HepG2 (cell line): ENCODE measurements at regions of chr3 and their contacts with region 1.

Region 1: DNA sequence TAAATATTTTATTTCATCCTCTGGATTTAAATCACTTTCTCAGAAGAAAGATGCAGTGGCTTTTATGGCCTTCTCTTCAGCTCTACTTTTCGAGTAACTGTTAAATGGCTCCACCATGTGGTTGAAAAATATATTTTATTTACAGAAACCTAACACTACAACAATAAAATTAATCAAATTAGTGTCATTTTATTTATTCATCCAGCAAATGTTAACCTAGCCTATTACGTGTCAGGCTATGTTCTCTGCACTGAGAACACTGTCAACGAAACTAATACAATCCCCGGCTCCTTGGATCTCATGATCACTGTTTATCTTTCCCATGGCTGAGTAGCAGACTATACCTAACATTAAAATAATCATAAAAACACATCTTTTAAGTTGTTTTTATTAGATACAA is 148.0 kb upstream of the OSTN start:
- DNase-seq: peak; percentile 9
- ATAC-seq: peak; percentile 55; the same call in 2 of the 3 replicates
- H3K4me3 ChIP-seq: no peak overlapping the region
- H3K27ac ChIP-seq: no peak overlapping the region
- H3K4me1 ChIP-seq: no peaks in the 10 kb centered on the region
- H3K27me3 ChIP-seq: no peaks in the 10 kb centered on the region
- CTCF ChIP-seq: peak; percentile 51; the same call in 1 of the 2 replicates
- EP300 ChIP-seq: no peak
- POLR2A ChIP-seq: no peak
- RAD21 ChIP-seq: no peak

Region 2: DNA sequence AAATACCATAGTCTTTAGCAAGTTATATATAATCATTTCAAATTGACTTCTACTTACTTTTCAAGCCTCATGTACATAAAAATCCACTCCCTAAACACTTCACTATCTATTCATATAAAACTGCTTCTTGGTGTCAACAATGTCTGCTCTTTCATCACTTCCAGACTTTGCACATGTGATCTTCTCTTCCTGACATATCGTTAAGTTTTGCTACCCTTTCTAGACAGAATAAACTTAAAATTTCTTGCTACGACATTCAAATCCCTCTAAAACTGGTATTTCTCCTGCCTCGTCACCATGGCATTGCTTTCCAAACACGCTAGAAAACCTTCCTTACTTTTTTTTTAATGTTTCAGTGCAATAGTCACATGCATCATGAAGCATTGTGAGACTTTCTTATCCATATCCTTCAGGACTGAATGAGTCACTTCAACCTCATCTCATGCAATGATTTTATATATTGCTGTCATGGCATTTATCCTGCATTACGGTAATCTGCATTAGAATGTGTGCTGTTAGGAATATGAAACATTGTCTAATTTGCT is 311.3 kb before region 1 on chr3:
- CTCF ChIA-PET with region 1: no interaction called
- POLR2A ChIA-PET with region 1: no interaction called
- in situ Hi-C with region 1: no loop called
- intact Hi-C with region 1: no loop called
- DNase-seq: no peak
- ATAC-seq: no peak
- H3K4me3 ChIP-seq: no peak overlapping the region
- H3K27ac ChIP-seq: no peak overlapping the region
- H3K4me1 ChIP-seq: no peaks in the 10 kb centered on the region
- H3K27me3 ChIP-seq: no peaks in the 10 kb centered on the region
- CTCF ChIP-seq: no peak
- EP300 ChIP-seq: no peak
- POLR2A ChIP-seq: no peak
- RAD21 ChIP-seq: no peak

Region 3: DNA sequence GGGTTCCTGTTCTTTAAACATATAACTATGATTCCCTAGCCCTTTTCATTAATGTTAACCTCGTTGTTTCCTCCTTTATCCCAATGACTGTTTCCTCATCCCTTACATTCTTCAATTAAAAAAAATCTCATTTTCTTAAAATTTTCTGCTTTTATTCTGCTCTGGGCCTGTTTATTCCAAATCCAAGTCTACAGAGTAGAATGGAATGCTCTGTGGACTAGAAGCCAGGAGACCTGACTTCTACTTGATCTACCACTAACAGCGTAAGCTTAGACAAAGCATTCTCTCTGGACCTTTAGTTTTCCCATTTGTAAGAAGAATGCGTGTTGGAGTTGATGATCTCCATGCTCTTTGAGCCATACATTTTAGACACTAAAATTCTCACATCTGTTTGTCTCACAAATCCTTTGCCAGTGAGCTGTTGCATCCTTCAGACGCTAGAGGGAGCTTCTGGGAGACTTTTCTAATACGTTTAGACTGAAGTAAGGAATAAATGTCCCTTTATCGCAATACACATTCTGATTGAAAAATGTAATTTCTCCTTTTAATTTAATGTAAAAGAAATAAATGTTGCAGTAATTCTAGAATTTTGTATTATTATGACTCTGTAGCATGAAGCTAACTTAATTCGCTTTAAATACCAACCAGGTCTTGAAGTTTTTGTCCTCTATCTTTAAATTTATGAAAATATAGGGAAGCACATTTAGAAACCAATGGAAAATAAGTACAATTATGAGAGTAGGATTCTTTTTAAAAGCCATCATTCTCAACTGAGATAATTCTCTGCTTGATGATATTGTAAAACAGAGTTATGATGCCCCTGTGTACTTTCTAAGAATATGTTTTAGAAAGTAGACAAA is 166.8 kb before region 1 on chr3:
- CTCF ChIA-PET with region 1: interaction called, 14 read pairs
- POLR2A ChIA-PET with region 1: no interaction called
- in situ Hi-C with region 1: loop called (anchors 10 kb)
- intact Hi-C with region 1: loop called (anchors 1 kb)
- DNase-seq: peak; percentile 53
- ATAC-seq: peak; percentile 68
- H3K4me3 ChIP-seq: no peak overlapping the region
- H3K27ac ChIP-seq: no peak overlapping the region
- H3K4me1 ChIP-seq: no peaks in the 10 kb centered on the region
- H3K27me3 ChIP-seq: no peaks in the 10 kb centered on the region
- CTCF ChIP-seq: peak; percentile 76
- EP300 ChIP-seq: no peak
- POLR2A ChIP-seq: no peak
- RAD21 ChIP-seq: no peak

Region 4: GRCh38 chr3:191008074-191008473 is 43.0 kb before region 1 on chr3:
- CTCF ChIA-PET with region 1: no interaction called
- POLR2A ChIA-PET with region 1: no interaction called
- in situ Hi-C with region 1: no loop called
- intact Hi-C with region 1: no loop called
- DNase-seq: no peak
- ATAC-seq: no peak
- H3K4me3 ChIP-seq: no peak overlapping the region
- H3K27ac ChIP-seq: no peak overlapping the region
- H3K4me1 ChIP-seq: no peaks in the 10 kb centered on the region
- H3K27me3 ChIP-seq: no peaks in the 10 kb centered on the region
- CTCF ChIP-seq: no peak
- EP300 ChIP-seq: no peak
- POLR2A ChIP-seq: no peak
- RAD21 ChIP-seq: no peak